PC-9 (cell line): ENCODE measurements at regions of chr19 and their contacts with region 1.

Region 1: DNA sequence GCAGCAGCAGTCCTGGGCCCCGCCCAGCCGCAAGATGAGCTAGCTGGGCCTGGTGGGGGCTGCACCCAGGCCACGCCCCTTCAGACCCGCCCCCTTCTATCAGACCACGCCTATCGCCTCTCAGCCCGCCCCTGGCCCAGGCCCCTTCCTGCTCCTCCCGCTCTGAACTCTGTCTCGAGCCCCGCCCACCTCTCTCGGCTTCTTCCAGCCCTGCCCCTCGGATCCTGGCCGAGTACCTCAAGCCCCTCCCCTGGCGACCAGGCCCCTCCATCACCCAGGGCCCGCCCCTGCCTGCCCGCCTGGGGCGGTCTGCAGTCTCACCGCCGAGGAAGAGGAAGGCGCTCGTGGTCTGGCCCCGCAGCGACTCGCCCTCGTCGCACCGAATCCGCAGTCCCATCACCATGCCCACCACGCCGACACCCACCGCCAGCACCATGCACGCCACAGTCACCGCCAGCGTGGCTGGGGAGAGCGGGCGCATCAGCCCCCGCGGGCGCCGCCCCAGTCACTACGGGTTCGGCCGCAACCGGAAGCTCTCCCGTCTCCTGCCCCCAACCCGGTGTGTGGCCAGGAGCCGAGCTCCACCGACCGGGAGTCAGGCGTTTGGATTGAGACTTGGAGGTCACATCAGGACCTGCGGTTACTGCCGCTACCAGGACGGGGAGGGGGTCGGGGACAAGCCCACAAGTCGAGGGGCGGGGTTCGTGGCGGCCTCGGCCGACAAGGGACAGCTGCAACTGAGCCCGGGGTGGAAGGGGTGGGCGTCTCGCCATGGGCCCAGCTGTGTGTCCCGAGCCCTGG is 1.0 kb downstream of the CLDND2 start:
- DNase-seq: peak; percentile 92 to 100
- H3K4me3 ChIP-seq: peak overlapping the region; percentile 92
- H3K27ac ChIP-seq: no peak overlapping the region
- H3K4me1 ChIP-seq: peaks cover 31% of the 10 kb centered on the region
- H3K27me3 ChIP-seq: peaks cover 25% of the 10 kb centered on the region
- CTCF ChIP-seq: no peak

Region 2: GRCh38 chr19:51311351-51312257 is 56.2 kb before region 1 on chr19 and contains the start of gene IGLON5:
- CTCF ChIA-PET with region 1: no interaction called
- POLR2A ChIA-PET with region 1: no interaction called
- intact Hi-C with region 1: no loop called
- DNase-seq: no peak
- H3K4me3 ChIP-seq: no peak within 1 kb of the TSS
- H3K27ac ChIP-seq: no peak within 1 kb of the TSS
- H3K4me1 ChIP-seq: no peaks in the 10 kb centered on the region
- H3K27me3 ChIP-seq: peaks cover 63% of the 10 kb centered on the region
- CTCF ChIP-seq: no peak
- total RNA-seq, gene IGLON5: not detected in 2 replicates

Region 3: DNA sequence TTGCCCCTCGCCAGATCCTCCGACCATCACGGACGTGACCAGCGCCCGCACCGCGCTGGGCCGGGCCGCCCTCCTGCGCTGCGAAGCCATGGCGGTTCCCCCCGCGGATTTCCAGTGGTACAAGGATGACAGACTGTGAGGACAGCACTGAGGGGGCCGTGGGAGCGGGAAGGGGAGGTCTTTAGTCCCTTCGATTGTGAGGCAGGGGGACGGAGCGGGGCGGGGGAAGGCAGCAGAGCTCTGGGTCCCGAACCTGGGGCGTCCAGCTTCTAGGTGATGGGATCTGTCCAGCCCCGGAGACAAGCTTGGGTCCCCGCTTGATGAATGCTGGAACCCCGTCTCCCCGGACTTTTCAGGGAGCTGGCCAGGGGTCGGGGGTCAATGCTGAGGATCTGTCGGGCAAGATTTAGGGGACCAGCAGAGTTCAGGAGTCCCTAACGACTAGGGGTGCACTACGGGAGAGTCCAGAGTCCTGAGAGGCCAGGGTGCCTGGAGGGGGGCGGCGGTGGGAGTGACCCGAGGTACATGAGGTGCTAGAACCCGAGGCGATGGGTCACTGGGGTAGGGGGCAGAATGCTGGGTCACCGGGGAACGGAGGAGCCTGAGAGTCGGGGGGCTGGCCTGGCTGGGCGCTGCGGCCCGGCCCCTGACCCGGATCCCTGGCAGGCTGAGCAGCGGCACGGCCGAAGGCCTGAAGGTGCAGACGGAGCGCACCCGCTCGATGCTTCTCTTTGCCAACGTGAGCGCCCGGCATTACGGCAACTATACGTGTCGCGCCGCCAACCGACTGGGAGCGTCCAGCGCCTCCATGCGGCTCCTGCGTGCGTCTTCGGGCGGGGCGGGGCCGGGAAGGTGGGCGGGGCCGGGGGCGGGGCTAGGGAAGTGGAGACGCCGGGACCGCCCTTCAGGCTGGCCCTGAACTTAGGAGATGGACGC is 40.4 kb before region 1 on chr19:
- CTCF ChIA-PET with region 1: no interaction called
- POLR2A ChIA-PET with region 1: no interaction called
- intact Hi-C with region 1: no loop called
- DNase-seq: no peak
- H3K4me3 ChIP-seq: no peak overlapping the region
- H3K27ac ChIP-seq: no peak overlapping the region
- H3K4me1 ChIP-seq: no peaks in the 10 kb centered on the region
- H3K27me3 ChIP-seq: peaks cover 31% of the 10 kb centered on the region
- CTCF ChIP-seq: no peak

Region 4: GRCh38 chr19:51338563-51339312 is 29.0 kb before region 1 on chr19:
- CTCF ChIA-PET with region 1: interaction called, 3 read pairs
- POLR2A ChIA-PET with region 1: interaction called, 9 read pairs
- intact Hi-C with region 1: loop called (anchors 1 kb)
- DNase-seq: peak; percentile 65 to 85
- H3K4me3 ChIP-seq: peak overlapping the region; percentile 84
- H3K27ac ChIP-seq: no peak overlapping the region
- H3K4me1 ChIP-seq: peaks cover 21% of the 10 kb centered on the region
- H3K27me3 ChIP-seq: no peaks in the 10 kb centered on the region
- CTCF ChIP-seq: peak; percentile 97

Region 5: GRCh38 chr19:51439021-51439465 is 71.3 kb after region 1 on chr19:
- CTCF ChIA-PET with region 1: no interaction called
- POLR2A ChIA-PET with region 1: no interaction called
- intact Hi-C with region 1: loop called (anchors 2 kb)
- DNase-seq: no peak
- H3K4me3 ChIP-seq: no peak overlapping the region
- H3K27ac ChIP-seq: no peak overlapping the region
- H3K4me1 ChIP-seq: no peaks in the 10 kb centered on the region
- H3K27me3 ChIP-seq: peaks cover 91% of the 10 kb centered on the region
- CTCF ChIP-seq: peak; percentile 36; the same call in 1 of the 2 replicates

Region 6: GRCh38 chr19:51547397-51548212 is 179.8 kb after region 1 on chr19:
- CTCF ChIA-PET with region 1: no interaction called
- POLR2A ChIA-PET with region 1: no interaction called
- intact Hi-C with region 1: no loop called
- DNase-seq: no peak
- H3K4me3 ChIP-seq: no peak overlapping the region
- H3K27ac ChIP-seq: no peak overlapping the region
- H3K4me1 ChIP-seq: no peaks in the 10 kb centered on the region
- H3K27me3 ChIP-seq: peaks cover 84% of the 10 kb centered on the region
- CTCF ChIP-seq: no peak

Region 7: GRCh38 chr19:51660975-51661600 is 293.3 kb after region 1 on chr19:
- CTCF ChIA-PET with region 1: interaction called, 8 read pairs
- POLR2A ChIA-PET with region 1: interaction called, 21 read pairs
- intact Hi-C with region 1: loop called (anchors 1 kb)
- DNase-seq: peak; percentile 48 to 72
- H3K4me3 ChIP-seq: no peak overlapping the region
- H3K27ac ChIP-seq: no peak overlapping the region
- H3K4me1 ChIP-seq: no peaks in the 10 kb centered on the region
- H3K27me3 ChIP-seq: peaks cover 47% of the 10 kb centered on the region
- CTCF ChIP-seq: peak; percentile 81

Region 8: DNA sequence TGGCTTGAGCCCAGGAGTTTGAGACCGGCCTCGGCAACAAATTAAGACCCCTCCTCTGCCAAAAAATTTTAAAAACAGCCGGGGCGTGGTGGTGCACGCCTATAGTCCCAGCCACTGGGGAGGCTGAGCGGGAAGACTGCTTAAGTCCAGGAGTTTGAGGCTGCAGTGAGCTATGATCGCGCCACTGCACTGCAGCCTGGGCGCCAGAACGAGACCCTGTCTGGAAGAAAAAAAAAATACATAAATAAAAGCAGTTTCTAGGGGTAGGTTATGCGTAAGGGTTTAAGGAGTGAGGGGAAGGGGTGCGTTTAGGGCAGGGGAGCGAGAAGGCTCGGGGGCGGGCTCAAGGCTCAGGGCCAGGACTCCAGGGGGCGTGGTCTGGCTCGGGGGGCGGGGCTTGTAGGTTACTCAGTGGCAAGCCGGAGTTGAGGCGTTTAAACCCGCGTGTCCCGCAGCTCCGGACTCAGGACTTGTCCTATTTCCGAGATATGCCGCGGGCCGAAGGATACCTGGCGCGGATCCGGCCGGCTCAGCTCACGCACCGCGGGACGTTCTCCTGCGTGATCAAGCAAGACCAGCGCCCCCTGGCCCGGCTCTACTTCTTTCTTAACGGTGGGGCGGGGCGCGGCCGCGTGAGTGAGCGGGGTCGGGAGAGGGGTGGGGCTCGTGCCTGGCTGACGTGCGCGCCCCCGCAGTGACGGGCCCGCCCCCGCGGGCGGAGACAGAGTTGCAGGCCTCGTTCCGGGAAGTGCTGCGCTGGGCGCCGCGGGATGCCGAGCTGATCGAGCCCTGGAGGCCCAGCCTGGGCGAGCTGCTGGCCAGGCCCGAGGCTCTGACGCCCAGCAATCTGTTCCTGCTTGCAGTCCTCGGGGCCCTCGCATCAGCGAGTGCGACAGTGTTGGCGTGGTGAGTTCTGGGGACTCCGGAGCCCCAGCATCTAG is 336.1 kb after region 1 on chr19:
- CTCF ChIA-PET with region 1: no interaction called
- POLR2A ChIA-PET with region 1: interaction called, 3 read pairs
- intact Hi-C with region 1: loop called (anchors 5 kb)
- DNase-seq: peak; percentile 83 to 97
- H3K4me3 ChIP-seq: peak overlapping the region; percentile 70
- H3K27ac ChIP-seq: peak overlapping the region; percentile 26; the same call in 1 of the 2 replicates
- H3K4me1 ChIP-seq: peaks cover 8% of the 10 kb centered on the region; the same call in 1 of the 2 replicates
- H3K27me3 ChIP-seq: no peaks in the 10 kb centered on the region
- CTCF ChIP-seq: peak; percentile 62